Transverse colon (tissue), 4 donors: ENCODE measurements at regions of chr16 and their contacts with region 1.

Region 1: GRCh38 chr16:11762431-11762830 is 19.8 kb upstream of the TXNDC11 start:
- DNase-seq: no peak
- H3K4me3 ChIP-seq: no peak overlapping the region
- H3K27ac ChIP-seq: no peak overlapping the region
- H3K4me1 ChIP-seq: peaks cover 5 to 23% (median 13%) of the 10 kb centered on the region in 4 donors
- H3K27me3 ChIP-seq: no peaks in the 10 kb centered on the region
- CTCF ChIP-seq: no peak
- EP300 ChIP-seq: no peak
- POLR2A ChIP-seq: no peak

Region 2: GRCh38 chr16:11604783-11605558 is 157.5 kb before region 1 on chr16:
- in situ Hi-C with region 1: no loop called
- intact Hi-C with region 1: no loop called
- DNase-seq: peak; percentile 54
- H3K4me3 ChIP-seq: no peak overlapping the region
- H3K27ac ChIP-seq: peak overlapping the region; percentile 54 to 64 (median 62)
- H3K4me1 ChIP-seq: peaks cover 0 to 29% (median 2%) of the 10 kb centered on the region in 4 donors
- H3K27me3 ChIP-seq: no peaks in the 10 kb centered on the region
- CTCF ChIP-seq: no peak
- EP300 ChIP-seq: peak; percentile 36
- POLR2A ChIP-seq: no peak

Region 3: GRCh38 chr16:11651796-11652195 is 110.6 kb before region 1 on chr16:
- in situ Hi-C with region 1: no loop called
- intact Hi-C with region 1: no loop called
- DNase-seq: no peak
- H3K4me3 ChIP-seq: no peak overlapping the region
- H3K27ac ChIP-seq: no peak overlapping the region
- H3K4me1 ChIP-seq: no peaks in the 10 kb centered on the region
- H3K27me3 ChIP-seq: no peaks in the 10 kb centered on the region
- CTCF ChIP-seq: no peak
- EP300 ChIP-seq: no peak
- POLR2A ChIP-seq: no peak

Region 4: DNA sequence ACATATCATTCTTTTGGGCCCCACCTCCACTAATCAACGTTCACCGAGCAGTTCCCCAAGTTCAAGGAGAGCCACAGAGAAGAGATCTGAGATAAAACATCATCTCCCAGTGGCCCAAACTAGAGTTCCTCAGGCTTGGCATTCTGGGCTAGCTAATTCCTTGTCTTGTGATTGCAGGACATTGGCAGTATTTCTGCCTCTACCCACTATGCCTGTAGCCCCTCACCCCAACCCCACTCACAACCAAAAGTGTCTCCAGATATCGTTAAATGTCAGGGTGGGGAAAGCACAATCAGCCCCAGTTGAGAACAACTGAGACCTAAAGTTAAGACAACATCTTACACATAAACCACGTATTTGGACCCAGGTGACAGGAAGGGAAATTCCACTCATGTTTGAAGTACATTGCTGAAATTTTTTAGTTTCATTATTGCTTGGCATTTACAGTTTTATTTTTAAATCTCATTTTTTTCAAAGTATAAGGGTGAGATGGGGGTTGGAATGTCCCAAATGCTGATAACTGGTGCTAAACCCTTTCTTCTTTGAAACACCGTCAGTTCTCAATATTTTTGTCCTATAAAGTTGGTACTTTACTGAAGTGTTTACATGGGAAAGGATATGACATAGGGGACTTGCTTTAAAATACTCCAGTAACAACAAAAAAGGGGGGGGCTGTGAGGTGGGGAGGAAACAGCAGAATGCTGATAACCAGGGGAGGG is 21.0 kb after region 1 on chr16:
- in situ Hi-C with region 1: no loop called
- intact Hi-C with region 1: loop called (anchors 1 kb)
- DNase-seq: no peak
- H3K4me3 ChIP-seq: peak overlapping the region in 1 of 4 donors; percentile 1
- H3K27ac ChIP-seq: peak overlapping the region; percentile 80 to 94 (median 88)
- H3K4me1 ChIP-seq: peaks cover 27 to 74% (median 51%) of the 10 kb centered on the region in 4 donors
- H3K27me3 ChIP-seq: no peaks in the 10 kb centered on the region
- CTCF ChIP-seq: no peak
- EP300 ChIP-seq: no peak
- POLR2A ChIP-seq: no peak